HEK293 (cell line): ENCODE measurements at regions of chr11 and their contacts with region 1.

Region 1: DNA sequence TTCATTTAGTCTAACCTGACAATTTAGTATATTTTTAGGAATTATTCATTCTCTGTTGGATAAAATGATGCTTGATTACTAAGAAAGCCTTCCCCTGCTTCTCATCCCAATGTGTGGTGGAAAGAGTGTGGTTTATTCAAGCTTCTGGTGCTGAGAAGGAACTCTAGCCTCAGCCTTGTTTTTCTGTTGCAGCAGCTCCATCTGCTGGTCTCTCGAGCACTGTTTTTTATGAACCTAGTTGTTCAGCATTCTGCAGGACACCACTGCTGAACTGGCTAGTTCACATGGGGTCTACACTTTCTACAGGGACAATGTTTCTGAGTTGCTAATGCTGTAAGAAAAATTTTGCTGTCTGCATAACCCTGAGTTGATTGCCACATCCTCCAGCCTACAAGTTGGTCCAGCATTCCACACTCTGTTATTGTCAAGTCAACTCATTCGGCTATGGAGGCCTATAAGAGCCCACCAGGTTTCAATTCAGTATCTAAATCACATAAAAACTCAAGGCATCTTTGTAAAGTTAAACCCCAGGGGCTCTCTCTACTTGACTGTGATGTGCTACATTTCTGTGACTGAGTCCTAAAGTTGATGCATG is 14.3 kb downstream of the OR2AG2 start:
- H3K4me3 ChIP-seq: no peak overlapping the region
- H3K27ac ChIP-seq: no peak overlapping the region
- H3K4me1 ChIP-seq: no peaks in the 10 kb centered on the region
- CTCF ChIP-seq: peak; percentile 23; the same call in 1 of the 2 replicates

Region 2: GRCh38 chr11:6635082-6635932 is 122.2 kb before region 1 on chr11:
- CTCF ChIA-PET with region 1: no interaction called
- POLR2A ChIA-PET with region 1: no interaction called
- H3K4me3 ChIP-seq: no peak overlapping the region
- H3K27ac ChIP-seq: no peak overlapping the region
- H3K4me1 ChIP-seq: no peaks in the 10 kb centered on the region
- CTCF ChIP-seq: no peak

Region 3: GRCh38 chr11:6746086-6746618 is 11.3 kb before region 1 on chr11:
- CTCF ChIA-PET with region 1: interaction called, 83 read pairs
- POLR2A ChIA-PET with region 1: no interaction called
- H3K4me3 ChIP-seq: no peak overlapping the region
- H3K27ac ChIP-seq: no peak overlapping the region
- H3K4me1 ChIP-seq: no peaks in the 10 kb centered on the region
- CTCF ChIP-seq: no peak

Region 4: GRCh38 chr11:6825231-6825744 is 67.8 kb after region 1 on chr11:
- CTCF ChIA-PET with region 1: no interaction called
- POLR2A ChIA-PET with region 1: no interaction called
- H3K4me3 ChIP-seq: no peak overlapping the region
- H3K27ac ChIP-seq: no peak overlapping the region
- H3K4me1 ChIP-seq: no peaks in the 10 kb centered on the region
- CTCF ChIP-seq: no peak

Region 5: GRCh38 chr11:7543302-7543701 is 785.8 kb after region 1 on chr11:
- CTCF ChIA-PET with region 1: no interaction called
- POLR2A ChIA-PET with region 1: no interaction called
- H3K4me3 ChIP-seq: no peak overlapping the region
- H3K27ac ChIP-seq: no peak overlapping the region
- H3K4me1 ChIP-seq: no peaks in the 10 kb centered on the region
- CTCF ChIP-seq: no peak

Region 6: DNA sequence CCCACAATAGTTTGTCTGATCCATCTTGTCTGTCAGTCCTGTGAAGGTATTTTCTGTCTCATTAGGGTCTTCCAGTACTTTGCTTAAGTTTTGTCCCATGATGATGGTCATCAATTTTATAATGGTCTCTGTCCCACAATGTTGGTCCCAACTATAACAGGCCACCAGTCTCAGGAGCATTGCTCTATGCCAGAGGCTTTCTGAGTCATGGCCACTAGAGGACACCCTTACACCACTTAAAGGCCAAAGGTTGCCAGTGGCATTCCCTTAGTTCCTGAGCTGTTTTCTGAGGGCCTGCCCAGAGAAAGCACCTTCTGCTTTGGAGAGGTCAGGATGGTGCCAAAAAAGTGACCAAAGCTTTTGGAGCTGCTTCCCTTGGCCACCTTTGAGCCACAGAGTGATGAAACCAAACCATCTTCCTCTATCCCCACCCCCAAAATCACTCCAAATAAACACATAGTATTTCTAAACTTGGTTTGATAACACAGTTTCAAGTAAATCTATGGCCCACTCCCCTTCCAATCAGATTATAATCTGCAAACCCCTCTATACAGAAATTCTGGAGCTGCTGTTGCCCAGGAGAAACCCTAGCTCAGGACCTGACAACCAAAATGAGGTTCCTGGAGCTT is 1249.0 kb after region 1 on chr11:
- CTCF ChIA-PET with region 1: no interaction called
- POLR2A ChIA-PET with region 1: no interaction called
- H3K4me3 ChIP-seq: no peak overlapping the region
- H3K27ac ChIP-seq: no peak overlapping the region
- H3K4me1 ChIP-seq: no peaks in the 10 kb centered on the region
- CTCF ChIP-seq: peak; percentile 68